ENCODE measurements at regions of chr10 and their contacts with region 1.

Region 1: GRCh38 chr10:21849607-21850006 is 153.9 kb downstream of the DNAJC1 start:
- DNase-seq: peak; percentile 2
- ATAC-seq: no peak
- H3K4me3 ChIP-seq: no peak overlapping the region
- H3K27ac ChIP-seq: no peak overlapping the region
- H3K4me1 ChIP-seq: no peaks in the 10 kb centered on the region
- H3K27me3 ChIP-seq: no peaks in the 10 kb centered on the region
- CTCF ChIP-seq: no peak
- POLR2A ChIP-seq: no peak
- RAD21 ChIP-seq: no peak

Region 2: DNA sequence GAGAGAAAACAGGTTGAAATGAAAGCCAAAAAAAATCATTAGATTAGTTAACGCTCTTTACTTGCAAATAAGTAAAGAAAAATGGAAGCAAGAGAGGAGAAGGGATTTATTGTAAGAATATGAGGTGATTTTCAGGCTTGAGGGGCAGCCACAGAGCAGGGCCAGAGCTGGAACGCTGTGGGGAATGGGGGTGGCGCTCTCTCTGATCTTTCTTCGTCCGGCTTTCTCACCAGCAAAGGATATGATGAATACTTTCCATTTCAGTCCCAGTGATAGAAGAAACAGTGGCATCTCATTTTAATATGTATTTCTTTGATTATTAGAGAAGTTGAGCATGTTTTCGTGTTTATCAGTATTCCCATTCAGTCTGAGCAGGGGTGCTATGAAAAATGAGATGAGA is 436.3 kb before region 1 on chr10:
- CTCF ChIA-PET with region 1: no interaction called
- POLR2A ChIA-PET with region 1: no interaction called
- RAD21 ChIA-PET with region 1: no interaction called
- intact Hi-C with region 1: no loop called
- DNase-seq: no peak
- ATAC-seq: no peak
- H3K4me3 ChIP-seq: no peak overlapping the region
- H3K27ac ChIP-seq: no peak overlapping the region
- H3K4me1 ChIP-seq: 0 out of 4 replicates have a peak, but pooled peaks cover 0 to 1% of the 10 kb centered on the region in 2 experiments
- H3K27me3 ChIP-seq: no peaks in the 10 kb centered on the region
- CTCF ChIP-seq: no peak
- POLR2A ChIP-seq: no peak
- RAD21 ChIP-seq: no peak

Region 3: DNA sequence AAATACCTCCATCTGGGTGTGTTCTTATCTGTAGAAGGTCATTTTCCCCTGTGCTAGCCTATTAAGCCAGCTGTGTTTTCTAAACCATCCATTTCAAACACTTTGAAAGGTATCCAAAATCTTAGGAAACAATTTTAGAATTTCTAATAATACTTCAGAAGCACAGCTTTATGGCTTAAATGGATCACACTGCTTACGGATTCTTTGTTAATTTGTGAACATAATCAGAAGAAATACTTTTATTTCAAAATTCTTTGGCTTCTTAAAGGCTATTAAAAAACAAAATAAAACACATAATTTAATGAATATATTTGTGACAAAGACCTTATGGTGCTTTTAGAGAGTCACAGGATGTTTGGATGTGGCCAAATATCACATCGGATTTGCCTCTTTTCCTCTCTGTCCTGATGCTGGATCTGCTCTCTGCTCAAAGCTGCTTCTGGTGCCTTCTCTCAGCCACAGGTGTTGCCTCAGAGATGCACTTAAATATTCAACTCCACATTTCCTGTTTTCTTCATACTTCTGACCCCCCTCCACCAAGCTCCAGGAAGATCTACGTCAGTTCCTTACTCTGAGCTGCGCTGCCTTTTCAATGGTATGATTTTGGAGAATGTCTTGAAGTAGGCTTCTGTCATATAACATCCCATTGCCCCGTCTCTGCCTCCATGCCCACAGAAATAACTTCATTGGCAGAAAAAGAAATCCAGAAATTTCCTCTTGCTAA is 85.0 kb before region 1 on chr10:
- CTCF ChIA-PET with region 1: no interaction called
- POLR2A ChIA-PET with region 1: no interaction called
- RAD21 ChIA-PET with region 1: no interaction called
- intact Hi-C with region 1: loop called (anchors 5 kb)
- DNase-seq: no peak
- ATAC-seq: no peak
- H3K4me3 ChIP-seq: no peak overlapping the region
- H3K27ac ChIP-seq: no peak overlapping the region
- H3K4me1 ChIP-seq: no peaks in the 10 kb centered on the region
- H3K27me3 ChIP-seq: no peaks in the 10 kb centered on the region
- CTCF ChIP-seq: no peak
- POLR2A ChIP-seq: no peak
- RAD21 ChIP-seq: no peak

Region 4: GRCh38 chr10:22173494-22173893 is 323.9 kb after region 1 on chr10:
- CTCF ChIA-PET with region 1: no interaction called
- POLR2A ChIA-PET with region 1: no interaction called
- RAD21 ChIA-PET with region 1: no interaction called
- intact Hi-C with region 1: no loop called
- DNase-seq: no peak
- ATAC-seq: no peak
- H3K4me3 ChIP-seq: no peak overlapping the region
- H3K27ac ChIP-seq: no peak overlapping the region
- H3K4me1 ChIP-seq: no peaks in the 10 kb centered on the region
- H3K27me3 ChIP-seq: no peaks in the 10 kb centered on the region
- CTCF ChIP-seq: no peak
- POLR2A ChIP-seq: no peak
- RAD21 ChIP-seq: no peak